ENCODE measurements at regions of chr6 and their contacts with region 1.

Region 1: GRCh38 chr6:33700391-33701050 is 11.0 kb downstream of the UQCC2 start:
- DNase-seq: peak; percentile 85
- H3K4me3 Mint-ChIP-seq: no peak overlapping the region
- H3K27ac Mint-ChIP-seq: no peak overlapping the region
- H3K4me1 Mint-ChIP-seq: peaks cover 19% of the 10 kb centered on the region
- H3K27me3 Mint-ChIP-seq: no peaks in the 10 kb centered on the region
- CTCF ChIP-seq: peak; percentile 69

Region 2: GRCh38 chr6:33213166-33213988 is 487.1 kb before region 1 on chr6:
- CTCF ChIA-PET with region 1: no interaction called
- POLR2A ChIA-PET with region 1: no interaction called
- intact Hi-C with region 1: no loop called
- DNase-seq: no peak
- H3K4me3 Mint-ChIP-seq: peak overlapping the region; percentile 50
- H3K27ac Mint-ChIP-seq: no peak overlapping the region
- H3K4me1 Mint-ChIP-seq: peaks cover 31% of the 10 kb centered on the region
- H3K27me3 Mint-ChIP-seq: peaks cover 48% of the 10 kb centered on the region
- CTCF ChIP-seq: no peak

Region 3: GRCh38 chr6:33592411-33593054 is 108.0 kb before region 1 on chr6:
- CTCF ChIA-PET with region 1: interaction called, 71 read pairs
- POLR2A ChIA-PET with region 1: interaction called, 6 read pairs
- intact Hi-C with region 1: loop called (anchors 1 kb)
- DNase-seq: no peak
- H3K4me3 Mint-ChIP-seq: no peak overlapping the region
- H3K27ac Mint-ChIP-seq: peak overlapping the region; percentile 11
- H3K4me1 Mint-ChIP-seq: peaks cover 31% of the 10 kb centered on the region
- H3K27me3 Mint-ChIP-seq: no peaks in the 10 kb centered on the region
- CTCF ChIP-seq: no peak

Measured in MCF 10A (cell line).